A673 (cell line): ENCODE measurements at regions of chr6 and their contacts with region 1.

Region 1: GRCh38 chr6:154868143-154868594 is 126.9 kb upstream of the TIAM2 start:
- DNase-seq: peak; percentile 77
- H3K4me3 ChIP-seq: no peak overlapping the region
- H3K27ac ChIP-seq: no peak overlapping the region
- H3K4me1 ChIP-seq: no peaks in the 10 kb centered on the region
- H3K27me3 ChIP-seq: no peaks in the 10 kb centered on the region
- CTCF ChIP-seq: peak; percentile 81

Region 2: GRCh38 chr6:154878871-154879491 is 10.8 kb after region 1 on chr6:
- CTCF ChIA-PET with region 1: no interaction called
- POLR2A ChIA-PET with region 1: no interaction called
- intact Hi-C with region 1: no loop called
- DNase-seq: no peak
- H3K4me3 ChIP-seq: no peak overlapping the region
- H3K27ac ChIP-seq: no peak overlapping the region
- H3K4me1 ChIP-seq: no peaks in the 10 kb centered on the region
- H3K27me3 ChIP-seq: no peaks in the 10 kb centered on the region
- CTCF ChIP-seq: no peak

Region 3: GRCh38 chr6:155248008-155249001 is 380.1 kb after region 1 on chr6:
- CTCF ChIA-PET with region 1: interaction called, 6 read pairs
- POLR2A ChIA-PET with region 1: no interaction called
- intact Hi-C with region 1: loop called (anchors 5 kb)
- DNase-seq: peak; percentile 61
- H3K4me3 ChIP-seq: no peak overlapping the region
- H3K27ac ChIP-seq: no peak overlapping the region
- H3K4me1 ChIP-seq: no peaks in the 10 kb centered on the region
- H3K27me3 ChIP-seq: no peaks in the 10 kb centered on the region
- CTCF ChIP-seq: peak; percentile 74